Naive thymus-derived CD8-positive, alpha-beta T cell (primary cell): ENCODE measurements at regions of chr20 and their contacts with region 1.

Region 1: GRCh38 chr20:48828022-48828743 is 384 bp upstream of the PREX1 start:
- DNase-seq: peak; percentile 67 to 92 (median 86)
- ATAC-seq: peak; percentile 69 to 72
- H3K4me3 Mint-ChIP-seq: peak overlapping the region; percentile 84 to 94 (median 88)
- H3K27ac Mint-ChIP-seq: peak overlapping the region; percentile 74 to 95 (median 92)
- H3K4me1 Mint-ChIP-seq: peaks cover 25 to 47% (median 40%) of the 10 kb centered on the region in 4 donors
- H3K27me3 Mint-ChIP-seq: no peaks in the 10 kb centered on the region

Region 2: GRCh38 chr20:48718857-48719578 is 109.2 kb before region 1 on chr20:
- POLR2A ChIA-PET with region 1: interaction called, 16 read pairs
- DNase-seq: peak in 6 of 10 donors; percentile 27 to 67 (median 40)
- ATAC-seq: peak; percentile 36 to 42
- H3K4me3 Mint-ChIP-seq: peak overlapping the region; percentile 44 to 85 (median 74)
- H3K27ac Mint-ChIP-seq: peak overlapping the region; percentile 79 to 99 (median 91)
- H3K4me1 Mint-ChIP-seq: peaks cover 59 to 100% (median 98%) of the 10 kb centered on the region in 4 donors
- H3K27me3 Mint-ChIP-seq: no peaks in the 10 kb centered on the region

Region 3: GRCh38 chr20:48738399-48739304 is 89.5 kb before region 1 on chr20:
- POLR2A ChIA-PET with region 1: interaction called, 15 read pairs
- DNase-seq: no peak
- ATAC-seq: peak; percentile 52 to 64
- H3K4me3 Mint-ChIP-seq: peak overlapping the region in 9 of 10 donors; percentile 3 to 71 (median 60)
- H3K27ac Mint-ChIP-seq: peak overlapping the region in 9 of 10 donors; percentile 65 to 95 (median 83)
- H3K4me1 Mint-ChIP-seq: peaks cover 45 to 70% (median 68%) of the 10 kb centered on the region in 4 donors
- H3K27me3 Mint-ChIP-seq: no peaks in the 10 kb centered on the region

Region 4: GRCh38 chr20:48750947-48751635 is 77.1 kb before region 1 on chr20:
- POLR2A ChIA-PET with region 1: interaction called, 19 read pairs
- DNase-seq: peak in 6 of 10 donors; percentile 30 to 54 (median 48)
- ATAC-seq: peak; percentile 88 to 93
- H3K4me3 Mint-ChIP-seq: peak overlapping the region; percentile 57 to 85 (median 72)
- H3K27ac Mint-ChIP-seq: peak overlapping the region; percentile 76 to 96 (median 92)
- H3K4me1 Mint-ChIP-seq: peaks cover 39 to 88% (median 79%) of the 10 kb centered on the region in 4 donors
- H3K27me3 Mint-ChIP-seq: no peaks in the 10 kb centered on the region

Region 5: GRCh38 chr20:48760403-48760983 is 67.7 kb before region 1 on chr20:
- POLR2A ChIA-PET with region 1: interaction called, 46 read pairs
- DNase-seq: peak; percentile 50 to 91 (median 79)
- ATAC-seq: peak; percentile 75 to 84
- H3K4me3 Mint-ChIP-seq: peak overlapping the region; percentile 63 to 88 (median 82)
- H3K27ac Mint-ChIP-seq: peak overlapping the region; percentile 93 to 100 (median 96)
- H3K4me1 Mint-ChIP-seq: peaks cover 44 to 98% (median 88%) of the 10 kb centered on the region in 4 donors
- H3K27me3 Mint-ChIP-seq: no peaks in the 10 kb centered on the region

Region 6: GRCh38 chr20:48772362-48773015 is 55.7 kb before region 1 on chr20:
- POLR2A ChIA-PET with region 1: interaction called, 16 read pairs
- DNase-seq: peak in 4 of 10 donors; percentile 23 to 32 (median 30)
- ATAC-seq: peak in 1 of 2 donors; percentile 2
- H3K4me3 Mint-ChIP-seq: peak overlapping the region in 9 of 10 donors; percentile 3 to 78 (median 69)
- H3K27ac Mint-ChIP-seq: peak overlapping the region; percentile 38 to 96 (median 90)
- H3K4me1 Mint-ChIP-seq: peaks cover 48 to 95% (median 89%) of the 10 kb centered on the region in 4 donors
- H3K27me3 Mint-ChIP-seq: no peaks in the 10 kb centered on the region

Region 7: GRCh38 chr20:48853591-48854443 is 25.6 kb after region 1 on chr20:
- POLR2A ChIA-PET with region 1: no interaction called
- DNase-seq: no peak
- ATAC-seq: no peak
- H3K4me3 Mint-ChIP-seq: no peak overlapping the region
- H3K27ac Mint-ChIP-seq: peak overlapping the region in 3 of 10 donors; percentile 6 to 74 (median 14)
- H3K4me1 Mint-ChIP-seq: peaks cover 0 to 16% (median under 1%) of the 10 kb centered on the region in 4 donors
- H3K27me3 Mint-ChIP-seq: no peaks in the 10 kb centered on the region